Sigmoid colon (tissue), 7 donors: ENCODE measurements at regions of chr11 and their contacts with region 1.

Region 1: DNA sequence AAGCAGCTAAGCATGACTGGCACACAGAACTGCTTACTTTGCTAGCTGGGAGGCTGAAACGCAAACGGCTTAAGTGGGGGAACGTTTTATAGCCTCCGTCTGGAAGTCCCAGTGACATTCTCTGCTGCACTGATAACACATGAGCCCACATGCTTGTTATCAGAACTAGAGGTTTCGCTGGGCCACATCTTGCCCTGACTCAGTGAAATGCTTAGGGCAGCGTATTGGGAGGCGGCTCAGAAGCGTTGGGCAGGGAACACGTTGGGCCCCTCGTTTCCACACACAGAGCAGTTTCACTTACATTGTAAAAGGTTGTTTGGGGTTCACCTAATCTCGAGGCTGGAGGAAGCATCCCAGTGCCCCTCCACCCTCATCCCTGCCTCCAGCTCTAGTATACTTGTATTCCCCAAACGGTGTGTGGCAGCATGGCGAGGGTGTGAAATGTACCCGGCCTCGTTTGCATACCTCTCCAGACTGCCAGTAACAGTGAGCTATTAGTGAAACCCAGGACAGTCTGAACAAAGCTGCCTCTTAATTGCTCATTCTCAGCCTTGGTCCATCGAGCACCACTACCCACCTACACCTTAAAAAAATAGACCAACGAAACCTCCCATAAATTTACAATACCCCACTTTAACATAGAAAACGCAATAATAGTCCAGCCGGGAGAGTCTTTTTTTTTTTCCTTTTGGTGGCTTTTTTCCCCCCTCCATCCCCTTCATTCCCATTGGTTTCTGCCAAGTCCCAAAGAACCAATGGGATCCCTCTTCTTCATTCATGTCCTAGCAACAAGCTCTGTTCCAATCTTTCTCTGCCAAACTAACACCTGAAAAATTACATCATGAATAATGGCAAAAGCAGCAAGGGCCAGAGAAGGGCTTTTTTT is 218.8 kb upstream of the SORL1-AS1 start:
- DNase-seq: no peak
- H3K4me3 ChIP-seq: peak overlapping the region in 3 of 4 donors; percentile 8 to 22 (median 16)
- H3K27ac ChIP-seq: peak overlapping the region; percentile 82 to 90 (median 84)
- H3K4me1 ChIP-seq: peaks cover 0 to 43% (median 39%) of the 10 kb centered on the region in 4 donors
- H3K27me3 ChIP-seq: no peaks in the 10 kb centered on the region
- CTCF ChIP-seq: no peak
- EP300 ChIP-seq: no peak
- POLR2A ChIP-seq: no peak

Region 2: DNA sequence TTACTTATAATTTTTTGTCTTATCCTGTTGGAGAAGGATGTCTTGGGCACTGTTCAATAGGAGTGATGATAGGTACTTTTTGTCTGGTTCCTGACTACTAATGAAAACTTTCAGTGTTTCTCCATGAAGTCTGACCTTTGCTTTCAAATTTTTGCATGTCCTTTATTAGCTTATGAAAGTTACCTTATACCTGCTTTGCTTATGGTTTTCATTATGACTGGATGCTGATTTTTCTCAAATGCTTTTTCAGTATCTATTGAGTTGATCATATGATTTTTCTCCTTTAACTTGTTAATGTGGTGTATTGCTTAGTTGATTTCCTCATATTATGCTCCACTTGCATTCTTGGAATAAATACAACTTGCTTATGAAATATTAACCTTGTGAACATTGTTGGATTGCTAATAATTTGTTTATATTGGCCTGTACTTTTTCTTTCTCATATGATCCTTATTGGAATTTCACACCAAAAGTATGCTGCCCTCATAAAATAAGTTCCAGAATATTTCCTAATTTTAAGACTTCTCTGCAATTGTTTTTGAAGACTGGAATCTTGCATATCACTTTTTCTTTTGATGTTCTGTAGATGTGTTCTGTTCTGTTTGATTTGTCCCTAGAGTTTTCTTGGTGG is 463.9 kb before region 1 on chr11:
- intact Hi-C with region 1: no loop called
- DNase-seq: no peak
- H3K4me3 ChIP-seq: no peak overlapping the region
- H3K27ac ChIP-seq: no peak overlapping the region
- H3K4me1 ChIP-seq: peaks cover 0 to 18% (median 11%) of the 10 kb centered on the region in 4 donors
- H3K27me3 ChIP-seq: no peaks in the 10 kb centered on the region
- CTCF ChIP-seq: no peak
- EP300 ChIP-seq: no peak
- POLR2A ChIP-seq: no peak

Region 3: GRCh38 chr11:121741761-121742361 is 70.3 kb after region 1 on chr11:
- intact Hi-C with region 1: loop called (anchors 5 kb)
- DNase-seq: peak; percentile 94
- H3K4me3 ChIP-seq: peak overlapping the region in 1 of 4 donors; percentile 7
- H3K27ac ChIP-seq: peak overlapping the region; percentile 82 to 89 (median 86)
- H3K4me1 ChIP-seq: peaks cover 0 to 37% (median 32%) of the 10 kb centered on the region in 4 donors
- H3K27me3 ChIP-seq: no peaks in the 10 kb centered on the region
- CTCF ChIP-seq: no peak
- EP300 ChIP-seq: peak; percentile 57 to 94 (median 82)
- POLR2A ChIP-seq: no peak